Ovary (tissue), 10 donors: ENCODE measurements at regions of chr4 and their contacts with region 1.

Region 1: GRCh38 chr4:22389240-22389870 is 126.5 kb downstream of the ADGRA3 start:
- DNase-seq: peak in 4 of 5 donors; percentile 37 to 58 (median 52)
- H3K4me3 ChIP-seq: no peak overlapping the region
- H3K27ac ChIP-seq: no peak overlapping the region
- H3K4me1 ChIP-seq: no peaks in the 10 kb centered on the region
- H3K27me3 ChIP-seq: no peaks in the 10 kb centered on the region
- CTCF ChIP-seq: peak in 1 of 3 donors; percentile 56
- EP300 ChIP-seq: no peak
- POLR2A ChIP-seq: no peak

Region 2: DNA sequence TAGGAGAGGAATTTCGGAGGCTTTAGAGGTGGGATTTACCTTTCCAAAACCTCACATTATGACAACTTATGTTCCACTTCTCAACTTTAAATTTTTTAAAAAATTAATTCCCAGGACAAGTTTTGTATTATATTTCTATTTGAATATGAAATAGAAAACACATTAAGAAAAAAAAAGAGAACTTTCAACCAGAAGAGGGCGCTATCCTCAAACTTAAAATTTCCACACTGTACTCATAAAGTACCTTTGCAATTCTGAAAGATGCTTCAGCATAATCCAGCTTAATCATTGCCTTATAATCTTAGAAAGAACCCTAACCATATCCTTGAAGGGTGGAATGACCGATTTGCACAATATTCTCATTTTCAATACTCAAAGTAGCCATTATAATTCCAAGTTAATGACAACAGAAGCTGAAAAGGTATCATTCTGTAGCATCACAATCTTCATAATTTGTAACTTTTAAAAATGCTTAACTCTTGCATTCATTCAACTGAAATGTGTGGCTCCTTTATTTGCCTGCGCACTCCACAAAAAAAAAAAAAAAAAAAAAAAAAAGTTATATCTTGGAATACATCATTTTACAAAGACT is 598.8 kb before region 1 on chr4:
- intact Hi-C with region 1: loop called in 1 of 4 experiments (anchors 5 kb)
- DNase-seq: no peak
- H3K4me3 ChIP-seq: no peak overlapping the region
- H3K27ac ChIP-seq: no peak overlapping the region
- H3K4me1 ChIP-seq: no peaks in the 10 kb centered on the region
- H3K27me3 ChIP-seq: no peaks in the 10 kb centered on the region
- CTCF ChIP-seq: peak in 2 of 3 donors; percentile 8 to 21
- EP300 ChIP-seq: no peak
- POLR2A ChIP-seq: no peak

Region 3: DNA sequence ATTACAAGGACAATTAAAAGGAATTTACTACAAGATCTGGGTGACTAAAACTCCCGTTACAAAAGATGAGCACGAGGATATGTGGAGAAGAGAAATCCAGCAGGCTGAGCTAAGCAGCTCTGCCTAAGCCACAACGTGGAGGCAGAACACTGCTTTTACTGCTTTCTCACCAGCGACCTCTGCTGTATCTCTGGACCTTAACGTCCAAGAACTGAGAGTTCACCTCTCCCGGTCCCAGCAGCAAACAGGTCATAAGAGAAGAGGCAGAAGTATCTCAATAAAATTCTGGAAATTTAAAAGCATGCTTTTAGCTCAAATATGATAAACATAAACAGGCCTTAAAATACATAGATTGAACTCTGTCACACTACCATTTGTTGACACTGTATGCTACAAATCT is 45.5 kb after region 1 on chr4:
- intact Hi-C with region 1: loop called in 1 of 4 experiments (anchors 1 kb)
- DNase-seq: no peak
- H3K4me3 ChIP-seq: no peak overlapping the region
- H3K27ac ChIP-seq: no peak overlapping the region
- H3K4me1 ChIP-seq: no peaks in the 10 kb centered on the region
- H3K27me3 ChIP-seq: no peaks in the 10 kb centered on the region
- CTCF ChIP-seq: no peak
- EP300 ChIP-seq: no peak
- POLR2A ChIP-seq: no peak